ENCODE measurements at regions of chr1 and their contacts with region 1.

Region 1: GRCh38 chr1:39816415-39817090 is 27.9 kb upstream of the BMP8B start:
- DNase-seq: peak; percentile 89
- ATAC-seq: peak; percentile 76
- H3K4me3 ChIP-seq: no peak overlapping the region
- H3K27ac ChIP-seq: peak overlapping the region; percentile 70
- H3K4me1 ChIP-seq: peaks cover 44% of the 10 kb centered on the region
- H3K27me3 ChIP-seq: no peaks in the 10 kb centered on the region
- CTCF ChIP-seq: peak; percentile 75

Region 2: GRCh38 chr1:39973503-39974135 is 157.1 kb after region 1 on chr1:
- CTCF ChIA-PET with region 1: no interaction called
- POLR2A ChIA-PET with region 1: no interaction called
- intact Hi-C with region 1: loop called (anchors 1 kb)
- DNase-seq: peak; percentile 78
- ATAC-seq: peak; percentile 86
- H3K4me3 ChIP-seq: peak overlapping the region; percentile 45; the same call in 1 of the 2 replicates
- H3K27ac ChIP-seq: no peak overlapping the region
- H3K4me1 ChIP-seq: no peaks in the 10 kb centered on the region
- H3K27me3 ChIP-seq: no peaks in the 10 kb centered on the region
- CTCF ChIP-seq: peak; percentile 98

Measured in PC-3 (cell line).